ENCODE measurements at regions of chrX and their contacts with region 1.

Region 1: GRCh38 chrX:123960042-123960611 is 1.4 kb upstream of the STAG2 start:
- DNase-seq: peak; percentile 82 to 94 (median 89)
- ATAC-seq: peak; percentile 68
- H3K4me3 ChIP-seq: peak overlapping the region; percentile 57 to 80
- H3K4me3 Mint-ChIP-seq: peak overlapping the region; percentile 98
- H3K27ac ChIP-seq: peak overlapping the region; percentile 94 to 97
- H3K27ac Mint-ChIP-seq: peak overlapping the region; percentile 99
- H3K4me1 ChIP-seq: no peaks in the 10 kb centered on the region
- H3K4me1 Mint-ChIP-seq: peaks cover 21% of the 10 kb centered on the region
- H3K27me3 ChIP-seq: no peaks in the 10 kb centered on the region
- H3K27me3 Mint-ChIP-seq: no peaks in the 10 kb centered on the region
- CTCF ChIP-seq: peak; percentile 77

Region 2: GRCh38 chrX:123833387-123833786 is 126.7 kb before region 1 on chrX:
- CTCF ChIA-PET with region 1: interaction called, 15 read pairs
- POLR2A ChIA-PET with region 1: interaction called, 3 read pairs
- intact Hi-C with region 1: loop called (anchors 1 kb)
- DNase-seq: peak; percentile 19 to 71 (median 59)
- ATAC-seq: peak; percentile 97
- H3K4me3 ChIP-seq: no peak overlapping the region
- H3K4me3 Mint-ChIP-seq: no peak overlapping the region
- H3K27ac ChIP-seq: no peak overlapping the region
- H3K27ac Mint-ChIP-seq: no peak overlapping the region
- H3K4me1 ChIP-seq: no peaks in the 10 kb centered on the region
- H3K4me1 Mint-ChIP-seq: no peaks in the 10 kb centered on the region
- H3K27me3 ChIP-seq: no peaks in the 10 kb centered on the region
- H3K27me3 Mint-ChIP-seq: peaks cover 3% of the 10 kb centered on the region
- CTCF ChIP-seq: peak; percentile 61

Region 3: DNA sequence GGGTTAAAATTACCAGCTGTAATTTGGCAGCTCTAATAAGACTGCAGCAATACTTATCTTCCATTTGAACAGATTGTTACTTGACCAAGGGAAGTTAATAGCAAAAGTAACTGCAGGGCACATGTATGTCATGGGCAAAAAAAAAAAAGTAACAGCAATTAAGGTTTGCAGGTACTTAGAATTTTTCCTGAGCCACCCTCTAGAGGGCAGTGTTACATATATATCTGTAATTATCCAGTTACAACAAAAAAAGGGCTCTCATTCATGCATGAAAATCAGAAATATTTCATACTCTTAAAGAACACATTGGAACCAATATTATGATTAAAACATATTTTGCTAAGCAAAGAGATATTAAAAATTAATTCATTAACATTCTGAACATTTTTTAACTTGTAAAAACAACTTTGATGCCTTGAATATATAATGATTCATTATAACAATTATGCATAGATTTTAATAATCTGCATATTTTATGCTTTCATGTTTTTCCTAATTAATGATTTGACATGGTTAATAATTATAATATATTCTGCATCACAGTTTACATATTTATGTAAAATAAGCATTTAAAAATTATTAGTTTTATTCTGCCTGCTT is 75.2 kb before region 1 on chrX:
- CTCF ChIA-PET with region 1: no interaction called
- POLR2A ChIA-PET with region 1: no interaction called
- intact Hi-C with region 1: loop called in 1 of 2 experiments (anchors 5 kb)
- DNase-seq: peak in 6 of 9 experiments; percentile 0 to 73 (median 28)
- ATAC-seq: peak; percentile 34
- H3K4me3 ChIP-seq: no peak overlapping the region
- H3K4me3 Mint-ChIP-seq: no peak overlapping the region
- H3K27ac ChIP-seq: no peak overlapping the region
- H3K27ac Mint-ChIP-seq: no peak overlapping the region
- H3K4me1 ChIP-seq: no peaks in the 10 kb centered on the region
- H3K4me1 Mint-ChIP-seq: peaks cover 12% of the 10 kb centered on the region
- H3K27me3 ChIP-seq: no peaks in the 10 kb centered on the region
- H3K27me3 Mint-ChIP-seq: no peaks in the 10 kb centered on the region
- CTCF ChIP-seq: peak; percentile 49

Region 4: DNA sequence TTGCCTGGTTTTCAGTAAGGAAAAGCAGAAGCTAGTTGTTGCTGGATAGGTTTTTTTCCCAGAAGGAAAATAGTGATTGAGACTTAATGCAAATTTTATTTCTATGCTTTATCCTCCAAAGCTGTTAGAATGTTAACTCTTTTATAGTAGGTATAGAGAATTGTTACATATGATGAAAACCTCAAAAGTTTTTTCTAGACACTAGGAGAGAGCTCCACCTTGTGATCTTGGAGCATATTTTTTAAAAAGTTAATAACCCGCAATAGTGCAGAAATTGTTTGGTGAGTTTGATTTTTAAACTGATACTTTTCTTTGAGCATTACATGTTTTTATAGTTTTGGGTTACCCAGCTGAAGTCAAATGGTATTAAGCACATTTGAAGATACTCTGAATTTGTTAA is 57.9 kb after region 1 on chrX:
- CTCF ChIA-PET with region 1: interaction called, 3 read pairs
- POLR2A ChIA-PET with region 1: interaction called, 5 read pairs
- intact Hi-C with region 1: loop called (anchors 1 kb)
- DNase-seq: peak in 2 of 9 experiments; percentile 16 to 39
- ATAC-seq: peak; percentile 57
- H3K4me3 ChIP-seq: no peak overlapping the region
- H3K4me3 Mint-ChIP-seq: no peak overlapping the region
- H3K27ac ChIP-seq: no peak overlapping the region
- H3K27ac Mint-ChIP-seq: peak overlapping the region; percentile 41
- H3K4me1 ChIP-seq: peaks cover 12% of the 10 kb centered on the region
- H3K4me1 Mint-ChIP-seq: peaks cover 49% of the 10 kb centered on the region
- H3K27me3 ChIP-seq: no peaks in the 10 kb centered on the region
- H3K27me3 Mint-ChIP-seq: no peaks in the 10 kb centered on the region
- CTCF ChIP-seq: no peak

Region 5: DNA sequence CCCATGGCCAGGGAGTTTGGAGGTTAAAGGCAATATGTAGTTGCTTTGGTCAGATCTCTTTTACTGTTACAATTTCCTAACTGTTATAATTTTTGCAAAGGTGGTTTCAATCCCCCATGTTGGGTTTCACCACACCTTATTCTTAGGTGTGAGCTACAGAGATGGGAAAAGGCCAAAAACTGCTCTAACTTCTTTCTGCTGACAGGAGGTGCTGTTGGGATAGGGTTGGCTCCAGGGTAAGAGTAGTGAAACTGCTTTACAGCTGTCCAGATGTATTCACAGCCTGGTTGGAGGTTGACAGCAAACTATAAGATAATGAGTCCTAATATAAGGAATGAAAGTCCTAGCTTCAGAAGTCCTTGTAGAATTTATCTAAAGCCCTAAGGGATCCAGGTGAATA is 191.1 kb after region 1 on chrX:
- CTCF ChIA-PET with region 1: no interaction called
- POLR2A ChIA-PET with region 1: no interaction called
- intact Hi-C with region 1: no loop called
- DNase-seq: no peak
- ATAC-seq: no peak
- H3K4me3 ChIP-seq: no peak overlapping the region
- H3K4me3 Mint-ChIP-seq: no peak overlapping the region
- H3K27ac ChIP-seq: no peak overlapping the region
- H3K27ac Mint-ChIP-seq: no peak overlapping the region
- H3K4me1 ChIP-seq: no peaks in the 10 kb centered on the region
- H3K4me1 Mint-ChIP-seq: no peaks in the 10 kb centered on the region
- H3K27me3 ChIP-seq: no peaks in the 10 kb centered on the region
- H3K27me3 Mint-ChIP-seq: no peaks in the 10 kb centered on the region
- CTCF ChIP-seq: no peak

Region 6: GRCh38 chrX:124217304-124218251 is 257.5 kb after region 1 on chrX:
- CTCF ChIA-PET with region 1: no interaction called
- POLR2A ChIA-PET with region 1: no interaction called
- intact Hi-C with region 1: loop called in 1 of 2 experiments (anchors 1 kb)
- DNase-seq: peak; percentile 19 to 83 (median 64)
- ATAC-seq: peak; percentile 94
- H3K4me3 ChIP-seq: peak overlapping the region in 1 of 2 experiments; percentile 18
- H3K4me3 Mint-ChIP-seq: peak overlapping the region; percentile 63
- H3K27ac ChIP-seq: peak overlapping the region; percentile 27 to 80
- H3K27ac Mint-ChIP-seq: peak overlapping the region; percentile 93
- H3K4me1 ChIP-seq: peaks cover 52% of the 10 kb centered on the region
- H3K4me1 Mint-ChIP-seq: peaks cover 74% of the 10 kb centered on the region
- H3K27me3 ChIP-seq: no peaks in the 10 kb centered on the region
- H3K27me3 Mint-ChIP-seq: no peaks in the 10 kb centered on the region
- CTCF ChIP-seq: no peak

Measured in CD8-positive, alpha-beta T cell (primary cell).